ENCODE measurements at regions of chr1 and their contacts with region 1.

Region 1: DNA sequence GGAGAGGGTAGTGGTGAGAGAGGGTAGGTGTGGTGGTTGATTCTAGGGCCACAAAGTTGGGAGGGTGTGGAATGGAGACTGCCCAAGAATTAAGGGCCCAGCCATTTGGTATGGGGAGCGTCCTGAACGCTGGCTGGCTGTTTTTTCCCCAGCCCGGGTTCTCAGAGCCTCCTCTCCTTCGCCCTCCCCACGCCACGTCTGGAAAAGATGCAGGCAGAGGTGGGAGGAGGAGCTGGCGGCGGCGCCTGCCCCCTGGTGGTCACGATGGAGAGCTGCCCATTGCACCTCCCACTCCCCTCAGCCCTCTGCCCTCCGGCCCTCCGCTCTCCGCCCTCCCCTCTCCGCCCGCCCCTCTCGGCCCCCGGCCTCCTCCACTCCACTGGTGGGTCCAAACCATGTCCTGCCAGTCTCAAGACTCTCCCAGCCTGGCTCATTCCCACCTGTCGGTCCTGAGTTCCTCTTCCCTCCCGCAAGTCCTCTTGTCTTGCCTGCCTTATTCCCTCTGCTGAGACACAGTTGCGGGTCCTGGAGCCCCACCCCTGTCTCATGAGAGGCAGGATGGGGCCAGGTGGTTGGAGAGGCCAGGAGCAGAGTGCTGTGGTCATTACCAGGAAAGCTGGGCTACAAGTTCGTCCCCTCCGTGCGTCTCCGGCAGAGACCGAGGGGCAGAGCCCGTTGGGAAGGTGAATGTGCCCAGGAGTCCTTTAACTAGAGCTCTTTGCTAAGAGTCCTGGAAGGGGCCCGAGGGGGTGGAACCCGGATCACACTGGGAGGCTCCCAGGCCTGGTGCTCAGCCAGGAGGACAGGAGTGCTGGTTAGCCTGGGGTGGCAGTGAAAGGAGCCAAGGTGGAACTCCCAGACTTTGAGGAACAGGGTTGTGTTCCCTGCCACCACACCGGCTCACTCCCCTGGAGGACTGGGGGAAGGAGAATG is 22.6 kb downstream of the ETNK2 start:
- DNase-seq: peak; percentile 82
- H3K4me3 ChIP-seq: no peak overlapping the region
- H3K27ac ChIP-seq: no peak overlapping the region
- H3K4me1 ChIP-seq: peaks cover 36% of the 10 kb centered on the region
- H3K27me3 ChIP-seq: no peaks in the 10 kb centered on the region
- CTCF ChIP-seq: peak; percentile 92

Region 2: GRCh38 chr1:203726417-203726867 is 402.8 kb before region 1 on chr1:
- CTCF ChIA-PET with region 1: no interaction called
- POLR2A ChIA-PET with region 1: no interaction called
- intact Hi-C with region 1: loop called (anchors 10 kb)
- DNase-seq: no peak
- H3K4me3 ChIP-seq: no peak overlapping the region
- H3K27ac ChIP-seq: no peak overlapping the region
- H3K4me1 ChIP-seq: no peaks in the 10 kb centered on the region
- H3K27me3 ChIP-seq: no peaks in the 10 kb centered on the region
- CTCF ChIP-seq: no peak

Region 3: DNA sequence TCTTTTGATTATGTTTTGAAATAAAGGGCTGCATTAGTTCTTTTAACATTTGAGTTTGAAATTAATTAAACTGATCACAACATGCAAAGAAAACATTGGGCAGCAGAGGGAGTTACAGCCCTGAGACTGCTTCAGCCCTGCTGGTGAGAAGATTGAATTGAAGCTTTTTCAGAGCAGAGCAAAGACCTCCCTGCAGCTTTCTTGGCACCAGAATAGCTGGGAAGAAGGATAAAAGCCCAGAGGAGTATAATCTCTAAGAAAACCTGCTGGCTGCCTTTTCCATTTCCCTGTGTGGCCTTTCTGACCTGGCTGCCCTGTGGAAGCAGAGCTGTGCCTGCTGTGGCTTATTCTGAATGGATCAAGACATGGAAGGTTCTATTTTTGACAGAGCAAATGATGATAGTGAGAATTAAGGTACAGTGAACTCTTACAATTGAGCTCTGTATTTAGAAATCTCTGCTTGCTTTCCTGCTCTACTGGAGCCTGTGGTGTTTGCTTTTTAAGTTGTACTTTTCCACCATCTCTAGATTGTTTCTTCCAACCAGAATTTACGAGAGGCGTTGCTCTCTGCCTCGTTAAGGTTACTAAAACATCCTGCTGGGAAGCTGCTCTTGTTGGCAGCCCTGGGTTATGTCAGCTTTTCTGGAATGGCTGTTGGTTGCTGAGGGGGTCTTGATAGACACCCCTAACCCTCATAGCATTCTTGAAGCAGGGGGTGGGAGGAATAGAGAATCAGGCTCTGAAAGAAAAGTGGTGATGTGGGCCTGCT is 257.9 kb before region 1 on chr1:
- CTCF ChIA-PET with region 1: interaction called, 74 read pairs
- POLR2A ChIA-PET with region 1: interaction called, 3 read pairs
- intact Hi-C with region 1: loop called (anchors 1 kb)
- DNase-seq: peak; percentile 86
- H3K4me3 ChIP-seq: no peak overlapping the region
- H3K27ac ChIP-seq: peak overlapping the region; percentile 7
- H3K4me1 ChIP-seq: peaks cover 6% of the 10 kb centered on the region
- H3K27me3 ChIP-seq: no peaks in the 10 kb centered on the region
- CTCF ChIP-seq: peak; percentile 90

Measured in A673 (cell line).